PC-9 (cell line): ENCODE measurements at regions of chr1 and their contacts with region 1.

Region 1: DNA sequence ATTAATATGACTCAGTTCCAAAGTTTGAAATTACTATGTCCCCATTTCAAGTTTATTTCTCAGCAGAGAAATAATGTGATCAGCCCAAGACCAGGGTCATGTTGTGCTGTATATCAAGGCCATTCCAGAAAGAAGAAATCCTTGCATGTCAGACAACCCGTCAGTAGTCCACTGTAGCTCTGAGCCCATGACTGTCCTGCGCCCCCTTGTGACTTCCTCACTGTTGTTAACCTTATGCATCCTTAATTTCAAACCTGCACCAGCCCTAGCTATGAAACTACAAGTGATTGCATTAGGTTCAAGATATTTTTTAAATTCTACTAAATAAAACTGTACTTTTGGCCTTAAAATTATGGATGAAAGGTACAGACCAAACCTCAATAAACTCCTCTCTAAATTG is 133.0 kb downstream of the LRRC7 start:
- DNase-seq: peak in 1 of 2 experiments; percentile 3
- H3K4me3 ChIP-seq: no peak overlapping the region
- H3K27ac ChIP-seq: no peak overlapping the region
- H3K4me1 ChIP-seq: no peaks in the 10 kb centered on the region
- H3K27me3 ChIP-seq: no peaks in the 10 kb centered on the region
- CTCF ChIP-seq: peak; percentile 39; the same call in 1 of the 2 replicates

Region 2: DNA sequence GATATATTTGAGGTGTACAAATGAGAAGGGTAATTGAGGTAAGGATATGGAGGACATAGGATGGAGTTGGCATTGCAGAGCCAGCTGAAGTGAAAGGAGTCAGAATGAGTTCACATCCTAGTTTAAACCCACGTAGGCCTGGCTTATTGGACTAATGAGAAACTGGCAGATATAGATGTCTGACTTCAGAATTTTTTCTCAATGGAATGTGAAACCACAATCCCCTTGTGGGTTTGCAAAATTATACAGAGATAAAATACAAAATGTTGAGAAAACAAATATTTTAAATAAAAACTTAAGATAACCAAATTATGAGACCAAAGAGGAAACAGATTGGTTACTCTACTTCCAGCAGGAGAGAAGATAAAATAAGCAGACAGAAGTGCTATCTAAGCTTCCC is 410.5 kb before region 1 on chr1:
- CTCF ChIA-PET with region 1: interaction called, 12 read pairs
- POLR2A ChIA-PET with region 1: no interaction called
- intact Hi-C with region 1: no loop called
- DNase-seq: no peak
- H3K4me3 ChIP-seq: no peak overlapping the region
- H3K27ac ChIP-seq: no peak overlapping the region
- H3K4me1 ChIP-seq: no peaks in the 10 kb centered on the region
- H3K27me3 ChIP-seq: no peaks in the 10 kb centered on the region
- CTCF ChIP-seq: no peak